PC-3 (cell line): ENCODE measurements at regions of chr3 and their contacts with region 1.

Region 1: DNA sequence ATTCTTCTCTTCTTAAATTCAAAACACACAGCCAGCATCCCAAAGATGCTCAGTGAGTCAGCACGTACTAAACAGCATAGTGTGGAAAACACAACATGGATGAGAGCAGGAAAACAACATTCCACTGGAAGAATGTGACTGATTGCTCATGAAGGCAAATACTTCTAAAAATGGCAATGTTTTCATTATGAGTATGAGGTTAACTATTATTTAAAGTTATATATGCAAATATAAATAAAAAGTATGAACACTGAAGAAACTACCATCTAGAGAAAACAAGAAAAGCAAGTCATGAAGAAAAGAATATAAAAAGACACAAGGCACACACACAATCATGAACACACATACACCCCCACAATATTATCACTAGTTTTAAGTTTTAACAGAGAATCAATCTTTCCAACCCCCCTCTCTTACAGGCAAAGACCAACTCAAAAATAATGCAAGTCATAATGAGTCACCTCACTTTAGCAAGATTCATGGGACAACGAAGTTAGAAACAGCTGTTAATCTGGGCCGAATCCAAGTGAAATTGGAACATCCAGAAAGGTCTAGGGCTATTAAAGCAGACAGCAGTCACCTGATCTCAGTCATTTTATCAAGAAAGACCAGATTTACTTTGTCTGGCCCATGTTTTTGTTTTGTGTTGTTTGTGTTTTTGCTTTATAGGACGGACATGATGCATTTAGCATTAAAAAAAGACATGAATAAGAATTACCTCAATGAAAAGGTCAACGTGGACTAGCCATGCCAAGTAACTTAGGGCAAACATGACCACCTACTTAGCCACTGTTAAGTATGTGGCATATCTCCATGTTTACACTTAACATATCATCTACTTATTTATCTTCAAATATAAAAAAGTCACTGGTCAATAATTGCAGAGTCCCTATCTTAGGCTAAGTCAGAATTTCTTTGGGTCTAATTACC is 18.1 kb downstream of the GBE1 start:
- DNase-seq: peak; percentile 96
- ATAC-seq: peak; percentile 77
- H3K4me3 ChIP-seq: peak overlapping the region; percentile 31
- H3K27ac ChIP-seq: peak overlapping the region; percentile 83
- H3K4me1 ChIP-seq: peaks cover 43% of the 10 kb centered on the region
- H3K27me3 ChIP-seq: no peaks in the 10 kb centered on the region
- CTCF ChIP-seq: no peak

Region 2: GRCh38 chr3:81592101-81592500 is 151.3 kb before region 1 on chr3:
- CTCF ChIA-PET with region 1: no interaction called
- POLR2A ChIA-PET with region 1: no interaction called
- intact Hi-C with region 1: loop called (anchors 10 kb)
- DNase-seq: peak; percentile 89
- ATAC-seq: peak; percentile 92
- H3K4me3 ChIP-seq: peak overlapping the region; percentile 2; the same call in 1 of the 2 replicates
- H3K27ac ChIP-seq: peak overlapping the region; percentile 55
- H3K4me1 ChIP-seq: peaks cover 25% of the 10 kb centered on the region
- H3K27me3 ChIP-seq: no peaks in the 10 kb centered on the region
- CTCF ChIP-seq: no peak

Region 3: DNA sequence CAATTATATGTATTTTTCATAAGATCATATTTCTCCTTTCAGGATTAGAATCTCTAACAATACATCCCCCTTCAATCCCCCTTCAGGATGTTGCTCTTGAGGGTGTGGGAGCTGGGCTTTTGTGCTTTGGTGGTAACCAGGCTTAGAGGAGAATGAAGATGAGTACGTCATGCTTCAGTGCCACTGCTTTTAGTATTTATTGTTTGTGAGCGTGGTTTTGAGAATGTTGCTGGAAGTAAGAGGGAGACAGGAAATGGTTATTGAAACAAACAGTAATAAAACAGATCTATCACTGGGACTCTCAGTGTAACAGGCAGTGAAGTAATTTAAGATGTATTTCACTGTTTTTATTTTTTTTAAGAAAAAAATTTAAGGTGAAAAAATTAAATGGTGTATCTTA is 17.2 kb before region 1 on chr3:
- CTCF ChIA-PET with region 1: no interaction called
- POLR2A ChIA-PET with region 1: no interaction called
- intact Hi-C with region 1: loop called (anchors 1 kb)
- DNase-seq: peak; percentile 59
- ATAC-seq: peak; percentile 60
- H3K4me3 ChIP-seq: peak overlapping the region; percentile 48
- H3K27ac ChIP-seq: peak overlapping the region; percentile 91
- H3K4me1 ChIP-seq: peaks cover 50% of the 10 kb centered on the region
- H3K27me3 ChIP-seq: no peaks in the 10 kb centered on the region
- CTCF ChIP-seq: no peak

Region 4: GRCh38 chr3:81760924-81761903 is 17.9 kb after region 1 on chr3 and contains the start of gene GBE1:
- CTCF ChIA-PET with region 1: no interaction called
- POLR2A ChIA-PET with region 1: interaction called, 5 read pairs
- intact Hi-C with region 1: loop called (anchors 1 kb)
- DNase-seq: peak; percentile 96
- ATAC-seq: peak; percentile 87
- H3K4me3 ChIP-seq: peak within 1 kb of the TSS; percentile 69
- H3K27ac ChIP-seq: peak within 1 kb of the TSS; percentile 96
- H3K4me1 ChIP-seq: peaks cover 27% of the 10 kb centered on the region
- H3K27me3 ChIP-seq: no peaks in the 10 kb centered on the region
- CTCF ChIP-seq: peak; percentile 59
- total RNA-seq, gene GBE1: 56.6 and 57.7 TPM in 2 replicates

Region 5: DNA sequence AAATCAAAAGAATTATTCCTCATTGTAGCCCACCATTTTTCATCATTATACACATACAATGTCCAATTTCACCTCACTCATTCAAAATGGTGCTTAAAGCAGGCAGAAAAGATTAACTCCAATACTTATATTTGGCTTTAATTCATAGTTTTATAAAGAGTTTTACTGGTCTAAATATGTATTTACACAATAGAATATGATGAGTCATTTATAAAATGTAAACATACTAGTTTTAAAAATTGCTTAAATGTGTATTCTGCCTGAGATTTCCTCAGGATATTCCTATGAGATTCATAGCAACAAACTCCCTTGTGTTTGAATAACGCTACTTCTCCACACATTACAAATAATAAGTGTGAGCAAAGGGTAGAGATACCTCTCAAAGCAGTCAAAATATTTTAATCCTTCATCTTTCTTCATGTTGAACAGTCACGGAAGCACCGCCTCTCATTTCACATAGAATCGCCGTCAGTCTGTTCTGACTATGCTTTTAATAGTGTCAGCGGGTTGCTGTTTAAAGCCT is 93.8 kb after region 1 on chr3:
- CTCF ChIA-PET with region 1: no interaction called
- POLR2A ChIA-PET with region 1: no interaction called
- intact Hi-C with region 1: loop called (anchors 1 kb)
- DNase-seq: peak; percentile 62
- ATAC-seq: peak; percentile 96
- H3K4me3 ChIP-seq: peak overlapping the region; percentile 41
- H3K27ac ChIP-seq: peak overlapping the region; percentile 66
- H3K4me1 ChIP-seq: peaks cover 16% of the 10 kb centered on the region
- H3K27me3 ChIP-seq: no peaks in the 10 kb centered on the region
- CTCF ChIP-seq: no peak

Region 6: DNA sequence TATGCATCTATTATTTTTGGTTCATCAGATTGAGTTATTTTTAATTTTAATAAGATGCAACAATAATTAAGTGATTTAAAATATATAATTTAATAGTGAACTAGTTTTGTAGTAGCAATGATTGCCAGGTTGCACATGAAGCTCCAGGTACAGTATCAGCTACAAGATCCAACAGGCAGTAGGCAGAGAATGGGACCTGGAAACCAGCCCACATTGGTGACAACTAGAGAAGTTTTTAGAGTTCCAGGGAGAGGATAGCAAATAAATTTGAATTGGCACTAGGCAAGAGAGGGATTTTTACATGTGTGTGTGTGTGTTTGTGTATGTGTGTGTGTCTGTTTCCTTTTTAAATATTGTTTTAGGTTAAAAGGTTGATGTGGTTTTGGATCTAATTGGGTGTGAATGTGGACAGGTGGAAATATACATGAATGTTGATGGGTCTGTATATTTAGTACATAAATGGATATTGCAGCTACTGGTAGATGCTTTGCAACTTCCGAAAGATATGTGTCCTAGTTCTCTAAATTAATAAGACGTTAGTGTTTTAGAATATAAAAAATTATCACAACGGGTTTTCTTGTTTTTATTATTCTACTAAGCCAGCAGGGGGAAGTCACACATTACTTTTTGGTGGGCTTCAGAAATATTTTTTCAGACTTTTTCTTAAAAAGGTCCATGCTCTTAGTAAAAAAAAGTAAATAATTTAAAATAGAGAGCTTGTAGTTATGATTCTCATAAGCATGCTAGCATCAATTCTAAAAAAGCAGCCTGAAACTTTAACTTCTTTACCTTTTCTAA is 128.2 kb after region 1 on chr3:
- CTCF ChIA-PET with region 1: no interaction called
- POLR2A ChIA-PET with region 1: no interaction called
- intact Hi-C with region 1: no loop called
- DNase-seq: peak; percentile 19
- ATAC-seq: no peak
- H3K4me3 ChIP-seq: no peak overlapping the region
- H3K27ac ChIP-seq: no peak overlapping the region
- H3K4me1 ChIP-seq: no peaks in the 10 kb centered on the region
- H3K27me3 ChIP-seq: no peaks in the 10 kb centered on the region
- CTCF ChIP-seq: peak; percentile 65

Region 7: GRCh38 chr3:82474711-82475110 is 731.4 kb after region 1 on chr3:
- CTCF ChIA-PET with region 1: no interaction called
- POLR2A ChIA-PET with region 1: no interaction called
- intact Hi-C with region 1: loop called (anchors 10 kb)
- DNase-seq: peak; percentile 94
- ATAC-seq: peak; percentile 95
- H3K4me3 ChIP-seq: peak overlapping the region; percentile 45; the same call in 1 of the 2 replicates
- H3K27ac ChIP-seq: peak overlapping the region; percentile 96
- H3K4me1 ChIP-seq: peaks cover 22% of the 10 kb centered on the region
- H3K27me3 ChIP-seq: no peaks in the 10 kb centered on the region
- CTCF ChIP-seq: no peak